HEK293 (cell line): ENCODE measurements at regions of chrX and their contacts with region 1.

Region 1: GRCh38 chrX:112851806-112852205 is 11.2 kb upstream of the AMOT start:
- H3K4me3 ChIP-seq: no peak overlapping the region
- H3K27ac ChIP-seq: peak overlapping the region; percentile 73
- H3K4me1 ChIP-seq: peaks cover 17% of the 10 kb centered on the region
- CTCF ChIP-seq: no peak

Region 2: DNA sequence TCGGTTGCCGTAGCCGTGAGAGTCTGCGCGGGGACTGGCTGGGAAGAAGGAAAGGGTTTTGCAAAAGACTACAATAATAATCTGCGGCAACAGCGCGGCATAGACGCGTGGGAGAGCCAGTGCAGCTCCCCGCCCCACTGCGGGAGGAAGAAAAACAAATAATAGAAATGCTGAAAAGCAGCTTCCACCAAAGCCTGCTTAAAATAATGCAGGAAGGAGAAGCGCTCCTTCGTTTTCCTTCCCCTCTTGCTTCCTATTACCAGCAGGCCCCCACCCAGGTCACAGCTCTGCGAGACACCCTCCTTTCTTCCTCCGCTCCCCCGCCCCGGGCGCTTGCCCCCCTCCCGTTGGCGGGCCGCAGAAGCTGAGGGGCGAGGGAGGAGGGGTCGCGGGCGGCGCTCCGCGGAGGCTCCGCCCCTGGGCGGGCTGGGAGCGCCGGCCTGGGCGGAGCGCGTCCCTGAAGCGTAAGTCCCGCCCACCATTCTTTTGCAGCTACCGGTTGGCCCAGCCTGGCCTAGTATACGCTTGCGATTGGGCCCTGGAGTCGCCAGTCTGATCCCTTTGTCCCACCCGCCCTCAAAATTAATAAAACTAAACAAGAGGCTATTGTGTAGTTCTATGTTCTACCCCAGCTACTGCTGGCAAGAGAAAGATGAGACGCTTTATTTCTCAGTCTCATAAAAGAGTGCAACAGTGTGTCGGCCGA is 10.5 kb before region 1 on chrX:
- CTCF ChIA-PET with region 1: interaction called, 3 read pairs
- POLR2A ChIA-PET with region 1: interaction called, 44 read pairs
- H3K4me3 ChIP-seq: peak overlapping the region; percentile 66
- H3K27ac ChIP-seq: peak overlapping the region; percentile 91
- H3K4me1 ChIP-seq: peaks cover 16% of the 10 kb centered on the region; the same call in 1 of the 2 replicates
- CTCF ChIP-seq: no peak

Region 3: DNA sequence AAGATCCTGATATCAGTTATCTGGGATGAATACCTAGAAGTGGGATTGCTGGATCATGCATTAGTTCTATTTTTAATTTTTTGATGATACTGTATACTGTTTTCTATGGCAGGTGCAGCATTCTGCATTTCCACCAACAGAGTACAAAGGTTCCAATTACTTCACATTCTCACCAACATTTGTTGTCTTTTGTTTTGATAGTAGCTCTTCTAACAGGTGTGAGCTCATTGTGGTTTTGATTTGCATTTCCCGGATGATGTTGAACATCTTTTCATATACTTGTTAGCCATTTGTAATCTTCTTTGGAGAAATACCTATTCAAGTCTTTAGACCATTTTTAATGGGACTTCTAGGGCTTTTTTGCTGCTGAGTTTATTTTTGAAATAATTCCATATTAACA is 128.1 kb after region 1 on chrX:
- CTCF ChIA-PET with region 1: no interaction called
- POLR2A ChIA-PET with region 1: no interaction called
- H3K4me3 ChIP-seq: no peak overlapping the region
- H3K27ac ChIP-seq: no peak overlapping the region
- H3K4me1 ChIP-seq: no peaks in the 10 kb centered on the region
- CTCF ChIP-seq: no peak